B cell (primary cell): ENCODE measurements at regions of chr20 and their contacts with region 1.

Region 1: DNA sequence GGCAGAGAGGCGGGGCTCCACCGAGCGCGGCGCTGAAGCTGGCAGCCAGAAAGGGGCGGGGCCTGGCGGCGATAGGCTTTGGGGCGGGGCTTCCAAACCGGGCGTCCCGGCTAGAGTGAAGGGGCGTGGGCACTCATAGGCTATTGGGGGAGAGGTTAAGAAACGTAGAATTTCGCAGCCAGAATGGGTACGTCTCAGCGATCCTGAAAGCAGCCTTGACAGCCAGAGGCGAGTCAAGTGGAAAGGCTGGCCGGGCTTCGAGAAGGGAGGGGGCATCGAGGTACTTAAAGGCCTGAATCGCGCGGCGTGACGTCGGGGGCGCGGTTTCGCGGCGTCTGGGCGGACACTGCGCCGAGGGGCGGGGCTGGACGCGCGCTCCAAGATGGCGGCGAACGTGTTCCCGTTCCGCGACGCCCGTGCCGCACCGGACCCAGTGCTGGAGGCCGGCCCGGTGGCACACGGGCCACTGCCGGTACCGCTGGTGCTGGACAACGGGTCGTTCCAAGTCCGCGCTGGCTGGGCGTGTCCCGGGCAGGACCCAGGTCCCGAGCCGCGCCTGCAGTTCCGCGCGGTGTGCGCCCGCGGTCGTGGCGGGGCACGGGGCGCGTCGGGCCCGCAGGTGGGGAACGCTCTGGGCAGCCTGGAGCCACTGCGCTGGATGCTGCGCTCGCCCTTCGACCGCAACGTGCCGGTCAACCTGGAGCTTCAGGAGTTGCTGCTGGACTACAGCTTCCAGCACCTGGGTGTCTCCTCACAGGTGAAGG is at the start of gene ACTR5:
- DNase-seq: peak; percentile 99
- ATAC-seq: peak; percentile 93
- H3K4me3 ChIP-seq: peak within 1 kb of the TSS; percentile 56 to 82 (median 71)
- H3K4me3 Mint-ChIP-seq: peak within 1 kb of the TSS; percentile 97
- H3K27ac ChIP-seq: peak within 1 kb of the TSS; percentile 80 to 91
- H3K27ac Mint-ChIP-seq: peak within 1 kb of the TSS; percentile 99
- H3K4me1 ChIP-seq: peaks cover 13 to 17% of the 10 kb centered on the region in 2 donors
- H3K4me1 Mint-ChIP-seq: peaks cover 22% of the 10 kb centered on the region
- H3K27me3 ChIP-seq: peaks cover 0 to 4% (median 2%) of the 10 kb centered on the region in 4 experiments
- H3K27me3 Mint-ChIP-seq: peaks cover 6% of the 10 kb centered on the region
- CTCF ChIP-seq: no peak
- total RNA-seq, gene ACTR5: 15.4 and 16.7 TPM in 2 replicates

Region 2: GRCh38 chr20:37693635-37694626 is 1054.3 kb before region 1 on chr20 and contains the start of gene CTNNBL1:
- CTCF ChIA-PET with region 1: no interaction called
- POLR2A ChIA-PET with region 1: no interaction called
- intact Hi-C with region 1: loop called (anchors 5 kb)
- DNase-seq: peak; percentile 97
- ATAC-seq: peak; percentile 94
- H3K4me3 ChIP-seq: peak within 1 kb of the TSS; percentile 61 to 97 (median 67)
- H3K4me3 Mint-ChIP-seq: peak within 1 kb of the TSS; percentile 99
- H3K27ac ChIP-seq: peak within 1 kb of the TSS; percentile 7 to 75
- H3K27ac Mint-ChIP-seq: peak within 1 kb of the TSS; percentile 94
- H3K4me1 ChIP-seq: peaks cover 23 to 31% of the 10 kb centered on the region in 2 donors
- H3K4me1 Mint-ChIP-seq: peaks cover 45% of the 10 kb centered on the region
- H3K27me3 ChIP-seq: peaks cover 0 to 8% (median 6%) of the 10 kb centered on the region in 4 experiments
- H3K27me3 Mint-ChIP-seq: peaks cover 8% of the 10 kb centered on the region
- CTCF ChIP-seq: no peak
- total RNA-seq, gene CTNNBL1: 64.7 and 64.8 TPM in 2 replicates

Region 3: GRCh38 chr20:38645980-38646858 is 102.1 kb before region 1 on chr20:
- CTCF ChIA-PET with region 1: interaction called, 102 read pairs
- POLR2A ChIA-PET with region 1: no interaction called
- intact Hi-C with region 1: loop called (anchors 1 kb)
- DNase-seq: peak; percentile 92
- ATAC-seq: peak; percentile 98
- H3K4me3 ChIP-seq: peak overlapping the region in 4 of 5 experiments; percentile 14 to 42 (median 36)
- H3K4me3 Mint-ChIP-seq: peak overlapping the region; percentile 87
- H3K27ac ChIP-seq: no peak overlapping the region
- H3K27ac Mint-ChIP-seq: no peak overlapping the region
- H3K4me1 ChIP-seq: peaks cover 12 to 13% of the 10 kb centered on the region in 2 donors
- H3K4me1 Mint-ChIP-seq: peaks cover 20% of the 10 kb centered on the region
- H3K27me3 ChIP-seq: peaks cover 0 to 46% (median 21%) of the 10 kb centered on the region in 4 experiments
- H3K27me3 Mint-ChIP-seq: peaks cover 54% of the 10 kb centered on the region
- CTCF ChIP-seq: peak; percentile 99

Region 4: DNA sequence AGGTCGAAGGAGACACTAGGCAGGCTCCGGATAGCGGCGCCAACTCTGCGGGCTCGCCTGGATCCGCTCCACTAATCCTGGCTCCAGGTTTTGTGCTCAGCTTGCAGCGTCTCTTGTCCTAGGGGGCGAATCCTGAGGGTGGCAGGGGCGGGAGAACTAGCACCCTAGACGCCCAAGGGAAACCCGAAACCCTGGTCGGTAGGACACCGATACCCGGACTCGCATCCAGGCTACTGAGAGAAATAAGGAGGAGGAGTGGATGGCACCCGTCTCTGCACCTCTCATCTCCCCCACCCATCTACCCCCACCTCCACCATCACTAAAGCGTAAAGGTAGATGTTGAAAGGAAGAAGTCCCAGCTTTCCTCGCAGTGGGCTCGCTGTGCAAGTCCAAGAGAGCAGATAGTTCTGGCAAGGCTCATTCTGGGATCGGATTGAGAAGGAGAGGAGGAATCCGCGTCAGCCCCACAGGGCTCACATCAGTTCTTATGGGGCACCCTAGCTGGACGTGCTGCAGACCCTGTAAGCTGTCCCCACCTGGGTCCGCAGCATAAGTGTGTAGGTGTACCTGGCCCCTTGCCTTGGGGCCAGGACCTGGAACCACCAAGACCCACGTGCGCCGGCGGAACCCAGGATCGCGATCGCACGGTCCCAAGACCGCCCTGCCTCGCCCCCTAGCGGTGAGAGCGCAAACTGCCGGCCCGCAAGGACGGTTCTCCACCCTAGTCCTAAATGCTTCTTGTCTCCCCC is 17.1 kb before region 1 on chr20:
- CTCF ChIA-PET with region 1: interaction called, 27 read pairs
- POLR2A ChIA-PET with region 1: interaction called, 3 read pairs
- intact Hi-C with region 1: loop called (anchors 2 kb)
- DNase-seq: peak; percentile 81
- ATAC-seq: peak; percentile 76
- H3K4me3 ChIP-seq: peak overlapping the region in 4 of 5 experiments; percentile 18 to 40 (median 28)
- H3K4me3 Mint-ChIP-seq: peak overlapping the region; percentile 69
- H3K27ac ChIP-seq: no peak overlapping the region
- H3K27ac Mint-ChIP-seq: peak overlapping the region; percentile 77
- H3K4me1 ChIP-seq: peaks cover 59 to 74% of the 10 kb centered on the region in 2 donors
- H3K4me1 Mint-ChIP-seq: peaks cover 51% of the 10 kb centered on the region
- H3K27me3 ChIP-seq: peaks cover 0 to 97% (median 86%) of the 10 kb centered on the region in 4 experiments
- H3K27me3 Mint-ChIP-seq: peaks cover 89% of the 10 kb centered on the region
- CTCF ChIP-seq: peak; percentile 97

Region 5: GRCh38 chr20:38805502-38805957 is 57.3 kb after region 1 on chr20 and contains the start of gene PPP1R16B:
- CTCF ChIA-PET with region 1: interaction called, 7 read pairs
- POLR2A ChIA-PET with region 1: interaction called, 7 read pairs
- intact Hi-C with region 1: loop called (anchors 1 kb)
- DNase-seq: peak; percentile 85
- ATAC-seq: peak; percentile 75
- H3K4me3 ChIP-seq: peak within 1 kb of the TSS; percentile 17 to 99 (median 95)
- H3K4me3 Mint-ChIP-seq: peak within 1 kb of the TSS; percentile 95
- H3K27ac ChIP-seq: peak within 1 kb of the TSS; percentile 99
- H3K27ac Mint-ChIP-seq: peak within 1 kb of the TSS; percentile 96
- H3K4me1 ChIP-seq: peaks cover 49 to 55% of the 10 kb centered on the region in 2 donors
- H3K4me1 Mint-ChIP-seq: peaks cover 53% of the 10 kb centered on the region
- H3K27me3 ChIP-seq: no peaks in the 10 kb centered on the region
- H3K27me3 Mint-ChIP-seq: no peaks in the 10 kb centered on the region
- CTCF ChIP-seq: no peak
- total RNA-seq, gene PPP1R16B: 108 and 112 TPM in 2 replicates

Region 6: GRCh38 chr20:38962044-38962927 is 214.0 kb after region 1 on chr20 and contains the start of gene DHX35:
- CTCF ChIA-PET with region 1: interaction called, 9 read pairs
- POLR2A ChIA-PET with region 1: no interaction called
- intact Hi-C with region 1: loop called (anchors 1 kb)
- DNase-seq: peak; percentile 99
- ATAC-seq: peak; percentile 95
- H3K4me3 ChIP-seq: peak within 1 kb of the TSS; percentile 76 to 96 (median 94)
- H3K4me3 Mint-ChIP-seq: peak within 1 kb of the TSS; percentile 98
- H3K27ac ChIP-seq: peak within 1 kb of the TSS; percentile 74 to 93
- H3K27ac Mint-ChIP-seq: peak within 1 kb of the TSS; percentile 99
- H3K4me1 ChIP-seq: peaks cover 14% of the 10 kb centered on the region in 2 donors
- H3K4me1 Mint-ChIP-seq: peaks cover 20% of the 10 kb centered on the region
- H3K27me3 ChIP-seq: no peaks in the 10 kb centered on the region
- H3K27me3 Mint-ChIP-seq: no peaks in the 10 kb centered on the region
- CTCF ChIP-seq: peak; percentile 63
- total RNA-seq, gene DHX35: 7.5 and 8.4 TPM in 2 replicates